ENCODE measurements at regions of chr3 and their contacts with region 1.

Region 1: DNA sequence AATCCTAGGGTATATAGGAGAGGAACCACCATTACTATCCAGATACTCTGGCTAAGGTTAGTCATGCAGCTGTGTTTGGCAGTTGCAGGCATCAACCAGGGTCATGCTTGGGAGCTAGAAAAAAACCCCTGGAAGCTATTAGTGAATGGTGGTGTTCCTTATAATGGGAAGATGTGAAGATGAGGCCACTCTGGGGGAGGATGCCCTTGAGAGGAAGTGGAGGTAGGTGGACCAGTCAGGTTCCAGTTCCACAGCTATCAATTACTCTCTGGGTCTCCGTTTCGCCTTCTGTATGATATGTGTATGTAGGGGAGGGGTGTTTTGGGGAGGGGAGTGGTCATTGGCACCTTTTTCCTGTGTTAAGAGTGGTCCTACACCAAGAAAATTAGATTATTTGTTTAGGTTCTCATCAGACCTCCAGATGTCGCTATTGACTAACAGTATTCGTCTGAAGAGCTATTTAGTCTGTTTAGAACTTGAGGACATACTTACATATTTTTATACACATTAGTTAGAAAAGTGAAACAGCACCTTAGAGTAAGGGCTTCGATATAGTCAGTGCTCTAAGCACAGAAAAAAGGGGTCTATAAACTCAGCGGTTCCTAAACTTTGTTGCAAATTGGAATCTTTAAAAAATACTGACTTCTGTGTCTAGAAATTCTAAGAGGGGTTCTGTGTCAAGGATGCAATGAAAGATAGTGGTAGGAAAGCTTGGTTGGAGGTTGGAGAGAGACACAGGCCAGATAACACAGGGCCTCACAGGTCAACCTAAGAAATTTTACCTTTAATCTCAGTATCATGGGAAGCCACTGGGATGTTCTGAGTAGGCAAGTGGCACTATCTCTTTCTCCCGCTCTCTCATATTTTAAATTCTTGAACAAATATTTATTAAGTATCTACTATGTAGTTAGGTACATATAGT is 9.1 kb upstream of the HPS3 start:
- DNase-seq: no peak
- H3K4me3 ChIP-seq: no peak overlapping the region
- H3K27ac ChIP-seq: no peak overlapping the region
- H3K4me1 ChIP-seq: no peaks in the 10 kb centered on the region
- H3K27me3 ChIP-seq: no peaks in the 10 kb centered on the region
- CTCF ChIP-seq: peak; percentile 41 to 47 (median 43)
- POLR2A ChIP-seq: no peak

Region 2: DNA sequence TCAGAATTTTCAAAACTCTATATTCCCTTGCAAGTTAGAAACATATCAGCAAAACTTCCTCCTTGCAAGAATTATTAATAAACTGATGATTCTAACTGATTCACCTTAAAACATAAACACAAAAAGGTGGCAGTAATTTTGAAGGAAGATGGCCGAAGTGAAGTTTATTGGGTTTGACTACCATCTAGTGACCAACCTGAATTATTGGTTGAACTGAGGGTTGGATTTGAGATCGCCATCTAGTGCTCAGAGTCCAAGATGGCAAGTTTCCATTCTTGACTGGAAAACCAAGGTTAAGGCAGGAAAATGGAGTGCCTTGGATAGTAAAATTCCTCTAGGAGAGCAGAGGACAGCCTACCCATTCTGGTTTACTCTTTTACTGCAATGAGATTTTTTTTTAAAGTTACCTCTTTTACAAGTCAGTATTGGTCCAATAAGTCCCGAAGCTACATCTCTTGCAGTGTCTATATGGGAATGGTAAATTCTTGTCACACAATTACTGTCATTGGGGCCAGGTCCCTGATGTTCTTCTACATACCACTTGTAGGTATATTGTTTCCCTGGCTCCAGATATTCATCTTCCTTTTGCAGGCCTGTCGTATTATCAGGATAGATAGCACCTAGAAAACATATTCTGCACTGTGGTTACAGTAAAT is 152.9 kb after region 1 on chr3:
- intact Hi-C with region 1: loop called (anchors 5 kb)
- DNase-seq: peak; percentile 68
- H3K4me3 ChIP-seq: no peak overlapping the region
- H3K27ac ChIP-seq: no peak overlapping the region
- H3K4me1 ChIP-seq: no peaks in the 10 kb centered on the region
- H3K27me3 ChIP-seq: no peaks in the 10 kb centered on the region
- CTCF ChIP-seq: peak; percentile 82 to 97 (median 92)
- POLR2A ChIP-seq: no peak

Measured in testis (tissue), 5 donors.